Psoas muscle (tissue), 8 donors: ENCODE measurements at regions of chr18 and their contacts with region 1.

Region 1: GRCh38 chr18:24271381-24272331 is 126.0 kb downstream of the OSBPL1A start:
- DNase-seq: peak; percentile 77 to 88
- ATAC-seq: peak; percentile 82 to 87 (median 85)
- H3K4me3 ChIP-seq: peak overlapping the region; percentile 95
- H3K27ac ChIP-seq: peak overlapping the region; percentile 89
- H3K4me1 ChIP-seq: peaks cover 23% of the 10 kb centered on the region
- H3K27me3 ChIP-seq: no peaks in the 10 kb centered on the region
- CTCF ChIP-seq: peak; percentile 35

Region 2: GRCh38 chr18:23994361-23994902 is 277.2 kb before region 1 on chr18:
- intact Hi-C with region 1: no loop called
- DNase-seq: no peak
- ATAC-seq: peak in 2 of 4 donors; percentile 27 to 36
- H3K4me3 ChIP-seq: no peak overlapping the region
- H3K27ac ChIP-seq: no peak overlapping the region
- H3K4me1 ChIP-seq: no peaks in the 10 kb centered on the region
- H3K27me3 ChIP-seq: no peaks in the 10 kb centered on the region
- CTCF ChIP-seq: no peak

Region 3: DNA sequence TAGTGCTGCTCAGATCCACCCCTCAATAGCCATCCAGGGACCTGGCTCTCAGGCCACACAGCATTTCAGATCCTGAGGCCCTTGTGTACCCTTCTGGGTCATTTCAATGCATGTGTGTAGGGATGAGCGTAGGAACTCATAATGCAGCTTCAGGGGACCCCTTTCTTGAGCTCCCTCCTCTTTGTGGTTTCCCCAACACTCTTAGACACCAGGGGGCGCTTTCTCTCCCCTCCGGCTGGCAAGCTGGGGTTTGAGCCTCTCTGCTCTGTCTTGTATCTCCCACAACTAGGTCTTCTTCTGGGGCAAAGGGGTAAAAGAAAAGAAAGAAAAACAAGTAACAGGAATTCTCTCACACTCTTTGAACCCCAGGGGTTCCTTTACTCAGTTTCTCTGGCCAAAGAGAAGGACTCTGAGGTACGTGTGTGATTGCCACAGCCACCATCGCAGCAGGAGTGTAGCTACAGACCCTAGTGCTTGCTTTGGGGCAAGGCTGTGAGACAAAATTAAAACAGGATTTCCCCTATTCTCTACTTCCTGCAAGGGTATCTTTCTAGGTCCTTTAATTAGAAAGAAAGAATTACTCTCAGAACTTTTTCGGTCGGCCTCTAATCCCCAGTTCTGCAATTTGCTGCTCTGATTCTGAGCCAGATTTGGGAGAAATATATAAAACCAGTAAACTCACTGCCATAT is 94.8 kb before region 1 on chr18:
- intact Hi-C with region 1: loop called (anchors 1 to 5 kb)
- DNase-seq: peak; percentile 50 to 63
- ATAC-seq: peak; percentile 71 to 82 (median 78)
- H3K4me3 ChIP-seq: no peak overlapping the region
- H3K27ac ChIP-seq: no peak overlapping the region
- H3K4me1 ChIP-seq: peaks cover 12% of the 10 kb centered on the region
- H3K27me3 ChIP-seq: no peaks in the 10 kb centered on the region
- CTCF ChIP-seq: peak; percentile 79

Region 4: DNA sequence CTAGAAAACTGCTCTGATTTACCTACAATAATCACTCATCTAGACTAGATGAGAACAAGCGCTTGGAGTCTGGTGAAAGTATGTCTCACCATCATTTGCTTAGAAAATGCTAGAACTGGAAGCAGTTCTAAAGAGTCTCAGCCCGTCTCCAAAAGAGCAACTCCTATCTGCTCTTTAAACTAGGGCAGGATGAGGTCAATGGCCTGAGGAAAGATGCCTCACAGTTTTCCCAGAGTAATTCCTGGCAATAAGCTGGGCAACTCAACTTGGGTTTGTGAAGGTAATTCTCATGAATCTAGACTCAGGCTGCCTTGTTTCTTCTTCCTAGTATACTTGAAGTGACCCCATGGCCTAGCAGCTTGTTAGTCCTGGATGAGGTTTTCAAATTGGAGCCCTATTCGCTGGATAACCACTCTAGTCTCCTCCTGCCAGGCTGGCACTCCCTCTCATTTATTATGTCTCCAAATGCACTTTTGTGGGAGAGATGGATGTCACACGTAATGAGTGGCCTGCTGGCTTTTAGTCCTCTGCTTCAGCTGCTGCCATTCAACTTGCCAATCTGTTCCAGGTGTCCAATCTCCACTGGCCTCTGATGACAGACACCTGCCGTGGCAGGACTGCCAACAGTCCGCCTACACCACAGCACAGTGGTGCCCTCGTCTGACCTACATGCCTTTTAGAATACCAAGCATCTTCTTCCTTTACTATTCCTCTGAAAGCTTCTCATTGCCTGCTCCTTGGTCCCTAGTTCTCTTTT is 51.9 kb before region 1 on chr18:
- intact Hi-C with region 1: loop called in 1 of 2 experiments (anchors 5 kb)
- DNase-seq: peak; percentile 46 to 76
- ATAC-seq: peak; percentile 99 to 100 (median 99)
- H3K4me3 ChIP-seq: no peak overlapping the region
- H3K27ac ChIP-seq: peak overlapping the region; percentile 76
- H3K4me1 ChIP-seq: peaks cover 38% of the 10 kb centered on the region
- H3K27me3 ChIP-seq: no peaks in the 10 kb centered on the region
- CTCF ChIP-seq: peak; percentile 18

Region 5: GRCh38 chr18:24227977-24228666 is 43.5 kb before region 1 on chr18:
- intact Hi-C with region 1: loop called (anchors 5 kb)
- DNase-seq: no peak
- ATAC-seq: no peak
- H3K4me3 ChIP-seq: no peak overlapping the region
- H3K27ac ChIP-seq: no peak overlapping the region
- H3K4me1 ChIP-seq: peaks cover 35% of the 10 kb centered on the region
- H3K27me3 ChIP-seq: no peaks in the 10 kb centered on the region
- CTCF ChIP-seq: no peak